ENCODE measurements at regions of chr11 and their contacts with region 1.

Region 1: GRCh38 chr11:75365711-75366181 is 14.3 kb upstream of the ARRB1 start:
- DNase-seq: no peak
- ATAC-seq: no peak
- H3K4me3 Mint-ChIP-seq: no peak overlapping the region
- H3K27ac Mint-ChIP-seq: no peak overlapping the region
- H3K4me1 Mint-ChIP-seq: peaks cover 18% of the 10 kb centered on the region
- H3K27me3 Mint-ChIP-seq: no peaks in the 10 kb centered on the region

Region 2: DNA sequence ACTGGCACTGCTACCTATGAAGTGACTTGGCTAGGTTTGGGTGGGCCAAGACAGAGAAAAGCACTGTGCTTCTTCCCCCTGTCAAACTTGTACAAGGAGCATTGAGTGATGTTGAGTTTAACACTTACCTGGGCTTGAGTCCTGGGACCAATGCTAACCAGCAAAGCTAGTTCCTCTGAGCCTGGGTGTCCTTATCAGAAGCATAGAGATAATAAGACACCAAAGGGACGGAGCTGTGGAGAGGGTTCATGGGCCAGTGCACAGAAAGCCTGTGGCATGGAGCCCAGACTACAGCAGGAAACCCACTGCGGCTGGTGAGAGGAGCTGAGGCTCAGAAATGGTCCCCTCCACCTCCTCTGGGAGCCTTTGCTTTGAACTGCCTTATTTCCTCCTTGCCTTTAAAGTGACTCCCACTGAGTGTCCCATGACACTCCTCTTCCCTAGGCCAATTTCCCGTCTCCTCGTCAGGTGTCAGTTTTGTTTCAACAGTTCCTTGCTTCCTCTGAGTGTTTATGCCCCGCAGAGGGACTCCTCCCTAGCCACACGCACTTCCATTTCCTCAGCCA is 205.5 kb before region 1 on chr11:
- POLR2A ChIA-PET with region 1: no interaction called
- DNase-seq: no peak
- ATAC-seq: no peak
- H3K4me3 Mint-ChIP-seq: no peak overlapping the region
- H3K27ac Mint-ChIP-seq: peak overlapping the region; percentile 4
- H3K4me1 Mint-ChIP-seq: peaks cover 6% of the 10 kb centered on the region
- H3K27me3 Mint-ChIP-seq: peaks cover 8% of the 10 kb centered on the region

Region 3: GRCh38 chr11:75351791-75352587 is 13.8 kb before region 1 on chr11:
- POLR2A ChIA-PET with region 1: interaction called, 46 read pairs
- DNase-seq: peak; percentile 78
- ATAC-seq: peak; percentile 68
- H3K4me3 Mint-ChIP-seq: peak overlapping the region; percentile 96
- H3K27ac Mint-ChIP-seq: peak overlapping the region; percentile 98
- H3K4me1 Mint-ChIP-seq: peaks cover 52% of the 10 kb centered on the region
- H3K27me3 Mint-ChIP-seq: no peaks in the 10 kb centered on the region

Region 4: GRCh38 chr11:75384438-75385080 is 18.8 kb after region 1 on chr11:
- POLR2A ChIA-PET with region 1: interaction called, 16 read pairs
- DNase-seq: peak; percentile 89
- ATAC-seq: peak; percentile 75
- H3K4me3 Mint-ChIP-seq: peak overlapping the region; percentile 66
- H3K27ac Mint-ChIP-seq: peak overlapping the region; percentile 90
- H3K4me1 Mint-ChIP-seq: peaks cover 22% of the 10 kb centered on the region
- H3K27me3 Mint-ChIP-seq: peaks cover 9% of the 10 kb centered on the region

Measured in activated naive CD8-positive, alpha-beta T cell treated with anti-CD3 and anti-CD28 coated beads, Interleukin-2, amount 10 ng/mL, durations not matched to agents 7 days and 5 days (primary cell).